ENCODE measurements at regions of chr17 and their contacts with region 1.

Region 1: GRCh38 chr17:44123356-44124117 is at the start of gene HDAC5:
- DNase-seq: peak; percentile 88 to 95 (median 95)
- ATAC-seq: peak; percentile 98
- H3K4me3 ChIP-seq: peak within 1 kb of the TSS; percentile 95
- H3K4me3 Mint-ChIP-seq: peak within 1 kb of the TSS; percentile 92 to 99 (median 98)
- H3K27ac ChIP-seq: peak within 1 kb of the TSS; percentile 90
- H3K27ac Mint-ChIP-seq: peak within 1 kb of the TSS; percentile 84 to 99 (median 96)
- H3K4me1 ChIP-seq: peaks cover 14 to 21% of the 10 kb centered on the region in 2 donors
- H3K4me1 Mint-ChIP-seq: peaks cover 21 to 53% (median 46%) of the 10 kb centered on the region in 7 donors
- H3K27me3 ChIP-seq: no peaks in the 10 kb centered on the region
- H3K27me3 Mint-ChIP-seq: peaks cover 0 to 9% (median 0%) of the 10 kb centered on the region in 5 donors
- total RNA-seq, gene HDAC5: 15.2 to 106 (median 70.9) TPM

Region 2: DNA sequence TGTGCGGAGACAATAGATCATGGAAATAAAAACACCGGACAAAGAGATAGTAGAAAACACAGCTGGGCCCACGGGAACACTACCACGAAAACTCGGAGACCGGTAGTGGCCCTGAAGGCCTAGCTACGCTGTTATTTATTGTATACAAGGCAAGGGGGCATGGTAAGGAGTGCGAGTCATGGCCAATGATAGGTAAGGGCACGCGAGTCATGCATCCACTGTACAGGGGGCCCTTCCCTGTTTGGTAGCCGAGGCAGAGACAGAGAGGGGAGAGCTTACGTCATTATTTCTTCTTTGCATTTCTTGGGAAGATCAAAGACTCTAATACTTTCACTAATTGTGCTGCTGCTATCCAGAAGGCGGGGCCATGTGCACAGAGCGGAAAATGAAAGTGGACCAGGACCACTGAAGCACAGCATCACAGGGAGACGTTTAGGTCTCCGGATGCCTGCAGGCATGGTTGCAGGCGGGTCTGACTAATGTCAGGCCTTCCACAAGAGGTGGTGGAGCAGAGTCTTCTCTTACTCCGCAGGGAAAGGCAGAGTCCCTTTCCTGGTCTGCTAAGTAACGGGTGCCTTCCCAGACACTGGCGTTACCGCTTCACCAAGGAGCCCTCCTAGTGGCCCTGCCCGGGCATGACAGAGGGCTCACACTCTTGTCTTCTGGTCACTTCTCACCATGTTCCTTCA is 799.2 kb before region 1 on chr17:
- CTCF ChIA-PET with region 1: no interaction called
- POLR2A ChIA-PET with region 1: no interaction called
- intact Hi-C with region 1: no loop called
- DNase-seq: no peak
- ATAC-seq: no peak
- H3K4me3 ChIP-seq: no peak overlapping the region
- H3K4me3 Mint-ChIP-seq: no peak overlapping the region
- H3K27ac ChIP-seq: no peak overlapping the region
- H3K27ac Mint-ChIP-seq: no peak overlapping the region
- H3K4me1 ChIP-seq: no peaks in the 10 kb centered on the region
- H3K4me1 Mint-ChIP-seq: peaks cover 0 to 2% (median 0%) of the 10 kb centered on the region in 7 donors
- H3K27me3 ChIP-seq: no peaks in the 10 kb centered on the region
- H3K27me3 Mint-ChIP-seq: peaks cover 0 to 25% (median 12%) of the 10 kb centered on the region in 5 donors

Region 3: GRCh38 chr17:43388359-43389045 is 735.0 kb before region 1 on chr17:
- CTCF ChIA-PET with region 1: no interaction called
- POLR2A ChIA-PET with region 1: no interaction called
- intact Hi-C with region 1: loop called in 1 of 2 experiments (anchors 5 kb)
- DNase-seq: peak; percentile 92 to 98 (median 95)
- ATAC-seq: peak; percentile 84
- H3K4me3 ChIP-seq: peak overlapping the region; percentile 94
- H3K4me3 Mint-ChIP-seq: peak overlapping the region; percentile 91 to 99 (median 96)
- H3K27ac ChIP-seq: peak overlapping the region; percentile 95
- H3K27ac Mint-ChIP-seq: peak overlapping the region; percentile 95 to 100 (median 98)
- H3K4me1 ChIP-seq: peaks cover 4 to 15% of the 10 kb centered on the region in 2 donors
- H3K4me1 Mint-ChIP-seq: peaks cover 16 to 39% (median 31%) of the 10 kb centered on the region in 7 donors
- H3K27me3 ChIP-seq: no peaks in the 10 kb centered on the region
- H3K27me3 Mint-ChIP-seq: no peaks in the 10 kb centered on the region

Region 4: DNA sequence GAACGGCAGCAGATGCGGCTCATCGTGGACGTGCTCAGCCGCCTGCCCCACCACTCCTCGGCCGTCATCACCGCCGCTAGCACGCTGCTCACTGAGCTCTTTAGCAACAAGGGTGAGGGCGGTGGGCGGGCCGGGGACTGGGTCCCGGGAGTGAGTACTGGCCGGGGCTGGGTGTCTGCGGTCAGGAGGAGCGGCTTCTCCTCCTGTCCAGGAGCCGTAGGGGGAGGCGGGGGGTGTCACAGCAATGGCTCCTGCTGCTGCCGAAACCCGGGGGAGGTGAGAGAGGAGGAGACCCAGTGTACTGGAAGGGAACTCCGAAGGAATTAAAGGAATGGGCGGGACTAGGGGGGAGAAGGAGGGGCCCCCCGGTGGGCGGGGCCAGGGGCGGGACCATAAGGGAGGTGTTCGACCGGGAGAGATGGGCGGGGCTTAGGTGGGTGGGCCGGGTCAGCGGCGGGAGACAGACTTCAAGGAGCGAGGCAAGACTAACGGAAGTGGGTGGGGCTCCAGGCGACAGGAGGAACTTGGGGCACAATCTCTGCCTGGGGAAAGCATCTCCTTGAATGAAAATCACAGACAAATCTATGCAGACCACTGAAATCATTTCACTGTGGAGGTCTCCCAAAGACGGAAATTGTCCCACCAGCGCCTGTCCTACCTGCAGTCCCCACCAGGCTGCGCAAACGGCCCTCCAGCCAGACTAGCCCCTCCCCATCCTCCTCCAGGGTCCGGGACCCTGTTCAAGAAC is 116.8 kb before region 1 on chr17:
- CTCF ChIA-PET with region 1: interaction called, 5 read pairs
- POLR2A ChIA-PET with region 1: interaction called, 5 read pairs
- intact Hi-C with region 1: loop called (anchors 1 to 2 kb)
- DNase-seq: peak; percentile 77 to 95 (median 86)
- ATAC-seq: peak; percentile 96
- H3K4me3 ChIP-seq: peak overlapping the region; percentile 89
- H3K4me3 Mint-ChIP-seq: peak overlapping the region; percentile 86 to 94 (median 90)
- H3K27ac ChIP-seq: peak overlapping the region; percentile 60
- H3K27ac Mint-ChIP-seq: peak overlapping the region; percentile 44 to 88 (median 68)
- H3K4me1 ChIP-seq: peaks cover 19 to 26% of the 10 kb centered on the region in 2 donors
- H3K4me1 Mint-ChIP-seq: peaks cover 16 to 30% (median 25%) of the 10 kb centered on the region in 7 donors
- H3K27me3 ChIP-seq: no peaks in the 10 kb centered on the region
- H3K27me3 Mint-ChIP-seq: peaks cover 0 to 30% (median 4%) of the 10 kb centered on the region in 5 donors

Region 5: DNA sequence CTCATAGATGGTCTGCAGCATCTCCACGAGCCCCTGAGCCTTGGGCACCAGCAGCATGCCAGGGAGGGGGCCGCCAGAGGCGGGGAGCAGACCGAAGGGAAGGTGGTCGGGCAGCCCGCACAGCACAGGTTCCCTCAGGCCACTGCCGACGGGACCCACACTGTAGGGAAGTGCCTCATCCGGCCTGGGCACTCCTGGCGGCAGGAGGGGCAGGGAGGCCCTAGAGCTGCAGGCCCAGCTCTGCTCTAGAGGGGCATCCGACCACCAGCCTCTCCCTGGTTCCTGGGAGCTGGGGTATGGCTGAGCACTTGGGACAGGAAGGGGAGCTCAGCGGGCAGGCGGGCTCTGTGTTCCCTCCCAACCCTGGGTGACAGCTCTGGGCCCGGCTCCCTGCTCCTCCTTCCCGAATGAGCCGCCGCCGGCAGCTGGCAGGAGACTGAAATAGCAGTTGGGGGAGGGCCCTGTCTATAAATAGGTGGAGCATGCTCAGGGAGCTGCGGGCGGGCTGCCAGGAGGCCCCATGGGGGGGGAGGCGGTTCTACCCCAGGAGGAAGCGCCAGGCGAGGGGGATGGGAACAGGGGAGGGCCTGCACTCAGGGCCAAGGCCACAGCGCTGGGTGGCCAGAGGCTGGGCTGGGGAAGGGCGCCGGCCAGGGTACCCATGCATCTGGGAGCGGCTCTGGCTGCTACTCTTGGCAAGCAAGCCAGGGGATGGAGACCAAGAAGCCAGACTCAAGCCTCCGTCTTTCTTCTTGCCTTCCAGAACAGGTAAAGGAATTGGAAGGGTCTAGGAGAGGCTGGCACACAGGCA is 12.5 kb before region 1 on chr17:
- CTCF ChIA-PET with region 1: interaction called, 3 read pairs
- POLR2A ChIA-PET with region 1: interaction called, 5 read pairs
- intact Hi-C with region 1: loop called in 1 of 2 experiments (anchors 1 kb)
- DNase-seq: peak; percentile 49 to 67 (median 63)
- ATAC-seq: peak; percentile 85
- H3K4me3 ChIP-seq: no peak overlapping the region
- H3K4me3 Mint-ChIP-seq: peak overlapping the region in 8 of 10 donors; percentile 17 to 71 (median 54)
- H3K27ac ChIP-seq: no peak overlapping the region
- H3K27ac Mint-ChIP-seq: peak overlapping the region in 4 of 9 donors; percentile 7 to 88 (median 78)
- H3K4me1 ChIP-seq: peaks cover 4 to 17% of the 10 kb centered on the region in 2 donors
- H3K4me1 Mint-ChIP-seq: peaks cover 15 to 45% (median 39%) of the 10 kb centered on the region in 7 donors
- H3K27me3 ChIP-seq: no peaks in the 10 kb centered on the region
- H3K27me3 Mint-ChIP-seq: no peaks in the 10 kb centered on the region

Region 6: GRCh38 chr17:44199553-44200477 is 76.3 kb after region 1 on chr17 and contains the start of gene ATXN7L3:
- CTCF ChIA-PET with region 1: no interaction called
- POLR2A ChIA-PET with region 1: interaction called, 9 read pairs
- intact Hi-C with region 1: loop called in 1 of 2 experiments (anchors 1 kb)
- DNase-seq: peak; percentile 90 to 99 (median 98)
- ATAC-seq: peak; percentile 91
- H3K4me3 ChIP-seq: peak within 1 kb of the TSS; percentile 68
- H3K4me3 Mint-ChIP-seq: peak within 1 kb of the TSS; percentile 90 to 97 (median 92)
- H3K27ac ChIP-seq: peak within 1 kb of the TSS; percentile 93
- H3K27ac Mint-ChIP-seq: peak within 1 kb of the TSS; percentile 91 to 97 (median 96)
- H3K4me1 ChIP-seq: peaks cover 27 to 34% of the 10 kb centered on the region in 2 donors
- H3K4me1 Mint-ChIP-seq: peaks cover 39 to 61% (median 53%) of the 10 kb centered on the region in 7 donors
- H3K27me3 ChIP-seq: no peaks in the 10 kb centered on the region
- H3K27me3 Mint-ChIP-seq: no peaks in the 10 kb centered on the region
- total RNA-seq, gene ATXN7L3: 93.5 to 130 (median 124) TPM

Region 7: GRCh38 chr17:44344939-44345453 is 221.5 kb after region 1 on chr17 and contains the start of gene GRN:
- CTCF ChIA-PET with region 1: interaction called, 4 read pairs
- POLR2A ChIA-PET with region 1: no interaction called
- intact Hi-C with region 1: loop called in 1 of 2 experiments (anchors 5 kb)
- DNase-seq: peak; percentile 67 to 85 (median 81)
- ATAC-seq: peak; percentile 96
- H3K4me3 ChIP-seq: peak within 1 kb of the TSS; percentile 88
- H3K4me3 Mint-ChIP-seq: peak within 1 kb of the TSS; percentile 88 to 96 (median 93)
- H3K27ac ChIP-seq: peak within 1 kb of the TSS; percentile 71
- H3K27ac Mint-ChIP-seq: peak within 1 kb of the TSS; percentile 42 to 88 (median 79)
- H3K4me1 ChIP-seq: peaks cover 6% of the 10 kb centered on the region in 2 donors
- H3K4me1 Mint-ChIP-seq: peaks cover 8 to 28% (median 19%) of the 10 kb centered on the region in 7 donors
- H3K27me3 ChIP-seq: no peaks in the 10 kb centered on the region
- H3K27me3 Mint-ChIP-seq: peaks cover 0 to 21% (median 7%) of the 10 kb centered on the region in 5 donors
- total RNA-seq, gene GRN: 49.5 to 374 (median 52.2) TPM